AG04449 (cell line): ENCODE measurements at regions of chr16 and their contacts with region 1.

Region 1: DNA sequence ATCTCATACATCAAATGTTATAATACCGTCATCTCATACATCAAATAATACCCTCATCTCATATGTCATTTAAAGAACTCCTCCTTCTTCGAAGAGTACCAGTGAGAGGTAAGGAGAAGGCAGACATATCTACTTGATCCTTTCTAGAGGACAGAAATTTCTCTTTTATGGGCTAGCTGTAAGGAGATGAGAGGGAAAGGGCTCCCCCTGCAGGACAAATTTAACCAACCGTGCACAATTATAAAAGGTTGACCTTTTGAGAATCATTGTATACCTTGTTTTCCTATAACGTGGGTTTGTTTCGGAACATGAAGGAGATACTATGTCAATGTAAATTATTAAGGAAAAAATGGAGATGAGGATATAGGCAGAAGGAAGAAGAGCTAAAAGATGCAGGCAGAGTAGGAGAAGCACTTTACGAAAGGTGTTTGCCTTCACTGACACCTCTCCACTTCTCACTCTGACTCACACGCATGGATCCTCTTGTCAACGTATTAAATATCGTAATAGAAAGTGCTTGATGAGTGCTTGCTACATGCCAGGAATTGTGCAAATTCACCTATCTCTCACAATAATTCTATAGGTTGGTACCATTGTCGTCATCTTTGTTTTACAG is 465.9 kb upstream of the ERCC4 start:
- DNase-seq: no peak
- H3K4me3 ChIP-seq: no peak overlapping the region
- CTCF ChIP-seq: peak; percentile 21

Region 2: GRCh38 chr16:12896562-12896961 is 557.5 kb before region 1 on chr16:
- CTCF ChIA-PET with region 1: interaction called, 10 read pairs
- POLR2A ChIA-PET with region 1: no interaction called
- DNase-seq: no peak
- H3K4me3 ChIP-seq: no peak overlapping the region
- CTCF ChIP-seq: peak; percentile 31